A549 (cell line): ENCODE measurements at regions of chr5 and their contacts with region 1.

Region 1: DNA sequence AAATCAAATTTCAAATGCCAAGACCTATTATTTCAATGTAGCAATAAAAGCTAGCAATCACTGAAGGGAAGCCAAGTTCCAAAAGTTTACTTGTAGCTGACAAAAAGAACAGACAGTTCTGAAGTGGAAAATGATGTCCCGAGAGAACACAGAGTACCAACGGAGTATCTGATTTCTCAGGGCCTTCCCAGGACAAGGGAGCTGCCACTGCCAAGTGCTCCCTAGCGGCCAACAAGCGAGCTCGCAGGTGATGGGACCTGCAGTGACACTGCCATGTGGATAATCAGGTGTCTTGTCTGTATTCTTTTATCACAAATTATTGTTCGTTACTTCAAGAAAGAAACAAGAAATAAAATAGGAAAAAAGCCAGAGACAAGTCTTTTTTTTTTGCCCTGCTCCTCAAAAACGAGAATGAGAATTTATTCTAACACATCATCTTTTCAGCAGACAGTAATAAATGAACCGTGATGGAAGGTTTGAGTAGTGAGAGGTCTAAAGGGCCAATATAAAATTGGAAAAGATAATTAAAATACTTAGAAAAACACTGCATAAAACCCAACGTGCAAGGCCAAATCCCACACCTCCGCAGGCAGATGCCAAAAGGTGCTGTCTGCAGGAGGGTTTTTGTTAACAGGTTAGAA is 159.4 kb downstream of the MYO10 start:
- DNase-seq: peak in 1 of 2 experiments; percentile 54
- ATAC-seq: peak; percentile 72 to 83; a peak in 4 of 6 replicates
- H3K4me3 ChIP-seq: no peak overlapping the region
- H3K27ac ChIP-seq: peak overlapping the region in 1 of 2 experiments; percentile 1; a peak in 1 of 6 replicates
- H3K4me1 ChIP-seq: peaks cover 26% of the 10 kb centered on the region
- CTCF ChIP-seq: peak; percentile 20; the same call in 2 of the 3 replicates
- EP300 ChIP-seq: no peak
- POLR2A ChIP-seq: no peak
- RAD21 ChIP-seq: no peak

Region 2: DNA sequence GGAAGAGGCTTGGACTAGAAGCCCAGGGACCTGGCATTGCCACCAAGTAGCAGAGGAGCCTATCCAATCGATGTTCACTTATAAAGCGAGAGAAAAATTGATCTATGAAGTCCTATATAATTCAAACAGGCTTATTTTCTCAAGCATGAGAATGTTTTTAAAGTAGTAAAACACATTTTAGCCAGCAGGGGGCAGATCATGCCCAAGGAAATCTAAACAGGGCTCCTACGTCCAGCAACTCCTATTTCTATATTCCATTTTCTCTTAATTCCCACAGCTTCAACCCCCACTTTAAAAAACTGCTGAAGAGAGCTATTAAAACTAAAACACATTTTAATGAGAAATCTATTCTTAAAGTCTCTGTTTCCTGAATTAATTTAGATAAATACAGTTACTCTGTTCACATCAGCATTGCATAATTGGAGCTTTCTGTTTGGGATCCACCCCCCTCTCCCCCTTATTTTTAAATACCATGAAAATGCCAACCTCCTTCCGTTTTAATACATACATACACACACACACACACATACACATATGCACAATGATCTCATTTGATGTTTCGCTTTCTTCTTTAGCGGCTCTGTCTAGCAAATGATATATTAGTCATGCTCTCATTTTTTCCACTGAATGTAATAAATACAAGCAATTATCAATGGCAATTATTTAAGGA is 14.4 kb after region 1 on chr5:
- CTCF ChIA-PET with region 1: interaction called, 12 read pairs
- POLR2A ChIA-PET with region 1: no interaction called
- DNase-seq: peak; percentile 55 to 64
- ATAC-seq: peak; percentile 54 to 58; a peak in 3 of 6 replicates
- H3K4me3 ChIP-seq: no peak overlapping the region
- H3K27ac ChIP-seq: peak overlapping the region; percentile 18 to 49; a peak in 4 of 6 replicates
- H3K4me1 ChIP-seq: peaks cover 34% of the 10 kb centered on the region
- CTCF ChIP-seq: peak; percentile 89
- EP300 ChIP-seq: no peak
- POLR2A ChIP-seq: no peak
- RAD21 ChIP-seq: peak; percentile 87 to 89

Region 3: DNA sequence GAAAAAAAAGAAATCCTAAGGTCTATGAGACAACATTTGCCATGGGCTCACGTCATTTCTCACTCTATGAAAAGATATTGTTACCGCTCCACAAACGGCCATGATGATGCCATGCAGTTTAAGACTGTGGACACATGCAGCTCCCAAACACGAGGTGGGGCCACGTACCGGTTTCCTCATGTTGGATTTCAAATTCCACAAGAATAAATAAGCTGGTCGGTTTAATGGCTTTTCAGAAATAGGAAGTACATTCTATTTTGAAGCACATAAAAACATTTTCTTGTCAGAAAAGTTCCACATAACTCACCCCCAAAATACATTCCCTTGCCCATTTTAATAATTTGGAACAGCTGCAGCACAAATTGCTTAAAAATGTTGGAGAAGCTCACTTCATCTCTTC is 28.8 kb after region 1 on chr5:
- CTCF ChIA-PET with region 1: no interaction called
- POLR2A ChIA-PET with region 1: no interaction called
- DNase-seq: no peak
- ATAC-seq: no peak
- H3K4me3 ChIP-seq: no peak overlapping the region
- H3K27ac ChIP-seq: no peak overlapping the region
- H3K4me1 ChIP-seq: peaks cover 31% of the 10 kb centered on the region
- CTCF ChIP-seq: no peak
- EP300 ChIP-seq: no peak
- POLR2A ChIP-seq: no peak
- RAD21 ChIP-seq: no peak

Region 4: DNA sequence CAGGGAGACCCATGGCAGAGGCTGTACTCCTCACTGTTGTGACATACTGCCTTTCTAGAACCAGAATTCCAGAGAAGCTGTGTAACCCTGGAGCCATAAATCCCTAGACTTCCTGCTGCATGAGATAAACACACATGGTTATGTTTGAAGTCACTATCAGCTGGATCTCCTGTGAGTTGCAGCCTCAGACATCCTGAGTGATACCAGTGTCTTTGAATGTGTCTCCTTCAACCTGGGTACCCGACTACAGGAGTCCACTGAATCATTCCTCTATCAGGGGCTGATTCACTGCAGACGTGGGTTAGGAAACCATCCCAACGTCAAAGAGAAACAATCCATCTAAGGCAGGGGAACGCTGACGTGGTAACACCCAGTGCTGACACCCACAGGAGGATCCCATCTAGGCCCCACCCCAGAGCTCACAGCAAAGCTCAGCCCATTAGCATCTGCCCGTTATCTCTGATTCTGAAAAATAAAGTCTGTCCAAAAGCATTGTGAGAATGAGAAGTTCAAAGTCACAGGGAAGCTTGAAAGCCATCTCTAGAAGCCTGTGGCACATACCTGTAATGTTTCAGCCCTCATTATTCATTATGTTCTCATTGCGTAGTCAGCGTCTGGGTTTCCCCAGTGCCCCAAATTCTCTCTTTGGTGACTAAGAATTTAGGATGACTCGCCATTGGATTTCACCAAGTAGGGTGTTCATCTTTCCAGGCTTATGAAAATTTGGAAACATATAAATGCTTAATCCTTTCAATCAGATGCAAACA is 404.4 kb after region 1 on chr5:
- CTCF ChIA-PET with region 1: no interaction called
- POLR2A ChIA-PET with region 1: interaction called, 12 read pairs
- DNase-seq: peak; percentile 72 to 95
- ATAC-seq: peak; percentile 96 to 99
- H3K4me3 ChIP-seq: no peak overlapping the region
- H3K27ac ChIP-seq: peak overlapping the region; percentile 69 to 87
- H3K4me1 ChIP-seq: peaks cover 44% of the 10 kb centered on the region
- CTCF ChIP-seq: no peak
- EP300 ChIP-seq: peak; percentile 83 to 93; a peak in 4 of 5 replicates
- POLR2A ChIP-seq: no peak
- RAD21 ChIP-seq: peak; percentile 29 to 30; a peak in 1 of 5 replicates